OCI-LY7 (cell line): ENCODE measurements at regions of chr12 and their contacts with region 1.

Region 1: GRCh38 chr12:128810182-128811127 is 13.3 kb downstream of the SLC15A4 start:
- DNase-seq: peak; percentile 33
- H3K4me3 ChIP-seq: peak overlapping the region; percentile 36
- H3K27ac ChIP-seq: peak overlapping the region; percentile 33
- H3K4me1 ChIP-seq: peaks cover 31% of the 10 kb centered on the region
- CTCF ChIP-seq: no peak

Region 2: GRCh38 chr12:128823916-128824839 is 13.7 kb after region 1 on chr12 and contains the start of gene SLC15A4:
- CTCF ChIA-PET with region 1: interaction called, 5 read pairs
- POLR2A ChIA-PET with region 1: interaction called, 34 read pairs
- intact Hi-C with region 1: no loop called
- DNase-seq: peak; percentile 96
- H3K4me3 ChIP-seq: peak within 1 kb of the TSS; percentile 99
- H3K27ac ChIP-seq: peak within 1 kb of the TSS; percentile 84
- H3K4me1 ChIP-seq: peaks cover 69% of the 10 kb centered on the region
- CTCF ChIP-seq: no peak; the same call in 1 of the 2 replicates
- total RNA-seq, gene SLC15A4: 46.7 and 53.3 TPM in 2 replicates

Region 3: DNA sequence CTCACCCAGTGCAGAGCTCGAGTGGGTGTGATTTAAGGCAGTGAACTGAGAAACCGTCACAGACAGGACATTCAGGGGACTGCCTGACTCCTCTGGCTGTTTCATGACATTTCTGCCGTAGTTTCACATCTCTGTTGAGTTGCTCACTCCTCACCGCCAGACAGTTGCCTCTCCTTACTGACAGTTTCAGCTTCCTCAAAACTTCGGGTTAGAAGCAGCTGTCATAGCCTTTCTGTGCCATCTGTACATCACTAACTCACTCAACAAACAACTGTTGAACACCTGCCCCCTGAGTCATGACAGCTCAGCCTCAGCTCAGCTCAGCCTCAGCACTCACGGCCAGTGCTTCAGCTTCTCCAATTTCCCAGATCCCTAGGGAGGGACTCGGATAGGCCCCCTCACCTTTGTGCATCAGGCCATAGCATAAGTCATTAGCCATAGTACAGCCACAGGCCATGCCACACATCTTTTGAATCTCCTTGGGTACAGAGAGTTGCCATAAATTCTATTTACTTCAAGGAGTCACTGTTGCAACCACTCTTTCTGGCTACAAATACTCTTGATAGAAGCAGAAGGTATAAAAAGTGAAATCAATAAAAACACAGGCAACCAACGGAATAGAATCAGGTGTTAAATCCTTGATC is 19.5 kb after region 1 on chr12:
- CTCF ChIA-PET with region 1: no interaction called
- POLR2A ChIA-PET with region 1: interaction called, 10 read pairs
- intact Hi-C with region 1: no loop called
- DNase-seq: peak; percentile 95
- H3K4me3 ChIP-seq: peak overlapping the region; percentile 44
- H3K27ac ChIP-seq: peak overlapping the region; percentile 92
- H3K4me1 ChIP-seq: peaks cover 61% of the 10 kb centered on the region
- CTCF ChIP-seq: no peak

Region 4: DNA sequence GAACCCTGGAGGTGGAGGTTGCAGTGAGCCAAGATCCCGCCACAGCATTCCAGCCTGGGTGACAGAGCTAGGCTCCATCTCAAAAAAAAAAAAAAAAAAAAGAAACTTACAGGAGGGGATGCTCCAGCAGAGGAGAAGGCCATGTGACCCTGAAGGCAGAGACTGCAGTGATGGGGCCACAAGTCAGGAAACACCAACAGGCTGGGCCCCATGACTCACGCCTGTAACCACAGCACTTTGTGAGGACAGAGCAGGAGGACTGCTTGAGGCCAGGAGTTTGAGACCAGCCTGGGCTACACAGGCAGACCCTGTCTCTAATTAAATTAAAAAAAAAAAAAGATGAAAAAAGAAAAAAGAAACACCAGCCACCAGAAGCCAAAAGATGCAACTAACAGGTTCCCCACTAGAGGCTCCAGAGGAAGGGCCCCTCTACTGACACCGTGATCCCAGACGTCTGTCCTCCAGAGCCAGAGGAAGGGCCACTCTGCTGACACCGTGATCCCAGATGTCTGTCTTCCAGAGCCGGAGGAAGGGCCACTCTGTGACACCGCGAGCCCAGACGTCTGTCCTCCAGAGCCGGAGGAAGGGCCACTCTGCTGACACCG is 33.7 kb after region 1 on chr12:
- CTCF ChIA-PET with region 1: no interaction called
- POLR2A ChIA-PET with region 1: no interaction called
- intact Hi-C with region 1: no loop called
- DNase-seq: no peak
- H3K4me3 ChIP-seq: no peak overlapping the region
- H3K27ac ChIP-seq: no peak overlapping the region
- H3K4me1 ChIP-seq: peaks cover 30% of the 10 kb centered on the region
- CTCF ChIP-seq: peak; percentile 61